Dorsolateral prefrontal cortex (tissue), 120 donors: ENCODE measurements at regions of chr6 and their contacts with region 1.

Region 1: GRCh38 chr6:111764238-111765175 is 108.7 kb downstream of the FYN start:
- DNase-seq: no peak
- H3K4me3 ChIP-seq: peak overlapping the region in 3 of 59 donors; percentile 8 to 19 (median 9)
- H3K27ac ChIP-seq: peak overlapping the region in 54 of 59 donors; percentile 0 to 85 (median 64)
- H3K27me3 ChIP-seq: no peaks in the 10 kb centered on the region
- CTCF ChIP-seq: no peak

Region 2: DNA sequence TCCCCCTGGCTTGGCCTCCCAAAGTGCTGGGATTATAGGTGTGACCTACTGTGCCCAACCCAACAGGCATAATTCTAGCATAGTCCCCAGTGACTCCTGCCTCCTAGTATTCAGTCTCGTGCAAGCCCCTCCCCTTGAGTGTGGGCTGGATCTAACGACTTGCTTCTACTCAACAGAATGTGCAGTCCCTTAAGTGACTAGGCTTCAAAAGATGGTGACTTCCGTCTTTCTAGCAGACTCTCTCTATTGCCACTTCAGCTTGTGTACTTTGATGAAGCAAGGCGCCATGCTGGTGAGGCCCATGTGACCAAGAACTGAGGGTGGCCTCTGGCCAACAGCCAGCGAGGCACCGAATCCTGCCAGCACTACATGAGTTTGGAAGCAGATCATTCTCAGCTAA is 49.2 kb before region 1 on chr6:
- intact Hi-C with region 1: loop called in 1 of 2 experiments (anchors 5 kb)
- DNase-seq: peak in 6 of 10 donors; percentile 36 to 68 (median 60)
- H3K4me3 ChIP-seq: no peak overlapping the region
- H3K27ac ChIP-seq: peak overlapping the region in 39 of 59 donors; percentile 0 to 85 (median 37)
- H3K27me3 ChIP-seq: no peaks in the 10 kb centered on the region
- CTCF ChIP-seq: no peak